A549 (cell line): ENCODE measurements at regions of chr10 and their contacts with region 1.

Region 1: GRCh38 chr10:109883859-109884771 is 39.2 kb downstream of the XPNPEP1 start:
- DNase-seq: peak; percentile 89 to 92
- ATAC-seq: peak; percentile 86 to 96
- H3K4me3 ChIP-seq: no peak overlapping the region
- H3K27ac ChIP-seq: peak overlapping the region; percentile 37 to 69; a peak in 4 of 6 replicates
- H3K4me1 ChIP-seq: peaks cover 6% of the 10 kb centered on the region
- CTCF ChIP-seq: peak; percentile 91
- EP300 ChIP-seq: no peak
- POLR2A ChIP-seq: no peak
- RAD21 ChIP-seq: peak; percentile 93 to 95

Region 2: DNA sequence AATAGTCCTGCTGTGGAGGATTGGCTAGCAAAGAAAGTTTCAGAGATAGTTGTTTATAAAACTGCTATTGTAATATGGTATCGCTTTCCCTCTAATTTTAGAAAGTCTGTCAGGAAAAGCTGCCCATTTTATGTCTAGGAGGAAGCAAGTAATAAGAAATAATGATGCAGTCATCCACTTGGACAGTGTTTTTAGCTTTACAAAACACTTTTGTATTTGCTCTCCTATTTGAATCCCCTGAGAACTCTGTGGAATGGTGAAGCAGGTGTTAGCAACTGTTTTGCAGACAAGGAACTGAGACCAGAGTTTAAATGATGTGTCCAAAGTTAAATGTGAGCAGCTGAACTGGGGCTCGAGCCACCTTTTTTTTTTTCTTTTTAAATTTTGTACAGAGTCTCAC is 416.6 kb before region 1 on chr10:
- CTCF ChIA-PET with region 1: no interaction called
- POLR2A ChIA-PET with region 1: no interaction called
- DNase-seq: no peak
- ATAC-seq: no peak
- H3K4me3 ChIP-seq: no peak overlapping the region
- H3K27ac ChIP-seq: no peak overlapping the region
- H3K4me1 ChIP-seq: no peaks in the 10 kb centered on the region
- CTCF ChIP-seq: no peak
- EP300 ChIP-seq: no peak
- POLR2A ChIP-seq: no peak
- RAD21 ChIP-seq: no peak

Region 3: DNA sequence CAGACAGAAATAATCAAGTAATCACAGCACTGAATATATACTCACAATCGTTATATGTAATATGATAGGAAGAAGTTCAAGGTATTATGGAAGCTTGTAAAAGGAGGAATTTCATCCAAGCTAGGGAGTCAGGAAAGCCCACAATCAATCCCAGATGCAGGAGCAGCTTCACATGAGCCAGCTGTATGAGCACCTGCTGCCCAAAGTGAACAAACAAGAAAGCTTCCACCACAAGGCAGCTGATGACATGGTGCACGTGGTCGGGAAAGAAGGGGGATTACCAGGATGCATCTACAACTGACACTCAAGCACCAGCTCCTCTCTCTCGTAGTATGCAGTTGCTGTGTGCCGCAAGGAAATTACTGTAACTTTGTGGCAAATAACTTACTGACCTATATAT is 186.0 kb before region 1 on chr10:
- CTCF ChIA-PET with region 1: no interaction called
- POLR2A ChIA-PET with region 1: no interaction called
- DNase-seq: no peak
- ATAC-seq: no peak
- H3K4me3 ChIP-seq: no peak overlapping the region
- H3K27ac ChIP-seq: no peak overlapping the region
- H3K4me1 ChIP-seq: no peaks in the 10 kb centered on the region
- CTCF ChIP-seq: no peak
- EP300 ChIP-seq: no peak
- POLR2A ChIP-seq: no peak
- RAD21 ChIP-seq: no peak

Region 4: GRCh38 chr10:109895095-109895818 is 11.1 kb after region 1 on chr10:
- CTCF ChIA-PET with region 1: interaction called, 43 read pairs
- POLR2A ChIA-PET with region 1: no interaction called
- DNase-seq: no peak
- ATAC-seq: peak in 1 of 2 experiments; percentile 59; a peak in 3 of 6 replicates
- H3K4me3 ChIP-seq: no peak overlapping the region
- H3K27ac ChIP-seq: no peak overlapping the region
- H3K4me1 ChIP-seq: no peaks in the 10 kb centered on the region
- CTCF ChIP-seq: no peak
- EP300 ChIP-seq: no peak
- POLR2A ChIP-seq: no peak
- RAD21 ChIP-seq: no peak

Region 5: DNA sequence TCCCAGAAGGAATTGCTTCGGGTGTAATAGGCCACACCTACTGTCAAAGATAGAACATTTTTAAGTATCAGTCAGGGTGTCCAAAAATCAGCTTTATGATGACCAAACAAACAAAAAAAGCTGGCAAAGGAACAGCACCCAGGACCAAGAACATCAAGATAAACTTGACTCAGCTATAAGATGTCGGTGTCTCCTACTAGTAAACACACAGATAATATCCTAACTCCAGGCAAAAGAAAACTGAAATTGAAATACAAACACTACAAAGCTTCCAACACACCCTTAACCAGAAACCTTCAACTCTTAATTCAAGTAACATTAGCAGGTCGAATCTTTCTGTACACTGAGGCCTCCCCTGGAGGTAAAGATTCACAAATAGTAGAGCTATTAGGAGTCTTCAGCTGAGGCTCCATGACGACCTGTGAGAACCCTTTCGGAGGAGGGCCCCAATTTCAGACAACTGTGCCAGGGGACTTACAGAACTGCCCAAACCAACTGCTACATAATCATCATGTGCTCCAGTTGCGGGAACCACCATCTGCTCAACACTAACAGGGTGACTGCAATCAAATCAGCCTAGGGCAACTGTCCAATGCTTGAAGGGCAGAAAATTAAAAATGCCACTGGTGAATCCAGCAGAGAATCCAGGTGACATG is 18.9 kb after region 1 on chr10:
- CTCF ChIA-PET with region 1: interaction called, 43 read pairs
- POLR2A ChIA-PET with region 1: no interaction called
- DNase-seq: no peak
- ATAC-seq: no peak
- H3K4me3 ChIP-seq: no peak overlapping the region
- H3K27ac ChIP-seq: no peak overlapping the region
- H3K4me1 ChIP-seq: no peaks in the 10 kb centered on the region
- CTCF ChIP-seq: no peak
- EP300 ChIP-seq: no peak
- POLR2A ChIP-seq: no peak
- RAD21 ChIP-seq: no peak

Region 6: GRCh38 chr10:110007701-110008517 is 123.8 kb after region 1 on chr10 and contains the start of gene ADD3:
- CTCF ChIA-PET with region 1: interaction called, 51 read pairs
- POLR2A ChIA-PET with region 1: no interaction called
- DNase-seq: peak; percentile 74 to 86
- ATAC-seq: peak; percentile 73 to 85
- H3K4me3 ChIP-seq: peak within 1 kb of the TSS; percentile 85
- H3K27ac ChIP-seq: peak within 1 kb of the TSS; percentile 70 to 88
- H3K4me1 ChIP-seq: peaks cover 24% of the 10 kb centered on the region
- CTCF ChIP-seq: no peak
- EP300 ChIP-seq: no peak
- POLR2A ChIP-seq: peak; percentile 88
- RAD21 ChIP-seq: no peak
- polyA plus RNA-seq, gene ADD3: 48.2 and 49.1 TPM in 2 replicates

Region 7: DNA sequence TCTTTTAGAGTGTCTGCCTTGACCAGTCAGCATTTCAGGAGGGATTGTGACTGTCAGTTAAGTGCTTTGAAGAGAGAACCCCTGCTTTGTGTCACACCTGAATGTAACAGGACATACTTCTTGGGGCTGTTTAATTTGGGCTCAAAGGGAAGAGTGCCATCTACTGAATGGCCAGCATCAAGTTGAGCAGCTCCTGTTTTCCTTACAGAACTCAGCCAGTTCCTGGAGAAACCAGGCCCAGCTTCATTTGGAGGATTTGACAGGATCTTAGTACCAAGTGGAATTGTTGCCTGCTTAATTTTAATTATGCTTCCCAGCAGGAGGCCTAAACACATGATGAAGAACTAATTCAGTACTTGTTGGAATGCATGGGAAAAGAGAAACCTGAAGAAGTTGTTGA is 131.9 kb after region 1 on chr10:
- CTCF ChIA-PET with region 1: interaction called, 51 read pairs
- POLR2A ChIA-PET with region 1: interaction called, 7 read pairs
- DNase-seq: peak; percentile 8 to 52
- ATAC-seq: peak; percentile 78 to 85; a peak in 4 of 6 replicates
- H3K4me3 ChIP-seq: no peak overlapping the region
- H3K27ac ChIP-seq: no peak overlapping the region
- H3K4me1 ChIP-seq: 0 out of 3 replicates have a peak, but pooled peaks cover 5% of the 10 kb centered on the region
- CTCF ChIP-seq: peak; percentile 52; the same call in 2 of the 3 replicates
- EP300 ChIP-seq: no peak
- POLR2A ChIP-seq: no peak
- RAD21 ChIP-seq: peak; percentile 58 to 64

Region 8: DNA sequence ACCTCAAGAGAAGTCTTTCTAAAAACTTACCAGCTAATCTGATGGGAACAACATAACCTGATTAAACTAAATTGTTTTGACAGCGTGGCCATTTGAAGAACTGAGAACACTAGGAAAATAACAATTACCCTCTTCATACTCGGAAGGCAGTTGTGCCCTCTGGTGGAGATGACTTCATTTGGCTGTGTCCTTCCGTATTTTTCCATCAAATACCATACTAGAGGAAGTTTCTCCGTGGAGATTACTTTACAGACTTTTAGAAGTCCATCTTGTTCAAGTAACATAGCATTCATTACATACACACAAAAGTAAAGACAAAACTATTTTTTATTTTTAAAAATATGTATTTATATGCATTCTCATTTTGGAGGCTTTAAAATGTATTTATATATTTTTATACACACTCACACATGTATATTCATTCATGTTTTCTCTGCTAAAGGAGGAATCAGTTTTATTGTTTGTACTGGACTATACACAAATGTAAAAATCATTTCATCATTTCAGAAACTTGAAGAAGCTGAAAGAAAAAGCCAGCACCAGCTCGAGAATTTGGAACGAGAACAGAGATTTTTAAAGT is 395.4 kb after region 1 on chr10:
- CTCF ChIA-PET with region 1: interaction called, 12 read pairs
- POLR2A ChIA-PET with region 1: no interaction called
- DNase-seq: peak; percentile 37 to 69
- ATAC-seq: peak; percentile 74 to 88; a peak in 5 of 6 replicates
- H3K4me3 ChIP-seq: no peak overlapping the region
- H3K27ac ChIP-seq: no peak overlapping the region
- H3K4me1 ChIP-seq: 0 out of 3 replicates have a peak, but pooled peaks cover 2% of the 10 kb centered on the region
- CTCF ChIP-seq: peak; percentile 96
- EP300 ChIP-seq: no peak
- POLR2A ChIP-seq: no peak
- RAD21 ChIP-seq: peak; percentile 91 to 92